ENCODE measurements at regions of chr3 and their contacts with region 1.

Region 1: GRCh38 chr3:149273096-149273751 is 51.6 kb upstream of the CP start:
- DNase-seq: no peak
- ATAC-seq: peak; percentile 89
- H3K4me3 ChIP-seq: no peak overlapping the region
- H3K27ac ChIP-seq: no peak overlapping the region
- H3K4me1 ChIP-seq: peaks cover 12% of the 10 kb centered on the region
- H3K27me3 ChIP-seq: no peaks in the 10 kb centered on the region
- CTCF ChIP-seq: peak; percentile 89

Region 2: DNA sequence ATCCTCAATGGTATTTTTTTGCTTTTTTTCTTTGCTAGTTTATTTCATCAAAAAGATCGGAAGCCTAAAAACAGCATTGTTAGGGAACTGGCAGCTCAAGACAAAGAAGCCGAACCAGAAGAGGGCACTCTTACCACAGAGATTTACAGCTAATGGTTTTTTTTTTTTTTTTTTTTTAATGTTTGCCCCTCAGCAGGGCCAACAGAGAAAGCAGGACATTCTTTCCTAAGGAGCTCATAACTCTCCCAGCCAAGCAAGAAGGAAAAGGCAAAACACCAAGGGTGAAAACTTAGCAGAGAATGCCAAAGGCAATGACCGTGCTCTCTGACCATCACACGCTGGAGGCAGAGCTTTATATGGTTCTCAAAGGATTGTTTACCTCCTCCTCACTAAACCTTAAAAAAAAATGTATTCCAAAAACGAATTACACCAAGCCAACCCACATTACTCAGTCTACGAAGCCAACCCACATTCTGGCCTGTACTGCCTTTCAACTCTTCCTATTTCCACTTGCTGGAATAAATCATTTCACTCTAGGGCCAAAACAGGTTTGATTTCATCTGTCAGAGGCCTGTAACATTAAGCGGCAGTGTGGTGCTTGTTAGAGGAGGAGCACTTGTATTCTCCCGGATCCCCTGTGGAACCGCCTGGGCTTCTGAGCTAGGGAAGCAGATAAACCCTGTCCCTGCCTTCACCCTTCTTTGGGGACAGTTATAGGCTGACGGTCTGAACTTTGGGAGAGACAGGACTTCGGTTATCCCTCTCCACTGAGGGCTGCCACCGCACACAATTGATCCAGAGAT is 317.5 kb before region 1 on chr3:
- intact Hi-C with region 1: loop called (anchors 10 kb)
- DNase-seq: no peak
- ATAC-seq: peak; percentile 57 to 83
- H3K4me3 ChIP-seq: no peak overlapping the region
- H3K27ac ChIP-seq: peak overlapping the region; percentile 57
- H3K4me1 ChIP-seq: peaks cover 8% of the 10 kb centered on the region
- H3K27me3 ChIP-seq: no peaks in the 10 kb centered on the region
- CTCF ChIP-seq: peak; percentile 60

Region 3: DNA sequence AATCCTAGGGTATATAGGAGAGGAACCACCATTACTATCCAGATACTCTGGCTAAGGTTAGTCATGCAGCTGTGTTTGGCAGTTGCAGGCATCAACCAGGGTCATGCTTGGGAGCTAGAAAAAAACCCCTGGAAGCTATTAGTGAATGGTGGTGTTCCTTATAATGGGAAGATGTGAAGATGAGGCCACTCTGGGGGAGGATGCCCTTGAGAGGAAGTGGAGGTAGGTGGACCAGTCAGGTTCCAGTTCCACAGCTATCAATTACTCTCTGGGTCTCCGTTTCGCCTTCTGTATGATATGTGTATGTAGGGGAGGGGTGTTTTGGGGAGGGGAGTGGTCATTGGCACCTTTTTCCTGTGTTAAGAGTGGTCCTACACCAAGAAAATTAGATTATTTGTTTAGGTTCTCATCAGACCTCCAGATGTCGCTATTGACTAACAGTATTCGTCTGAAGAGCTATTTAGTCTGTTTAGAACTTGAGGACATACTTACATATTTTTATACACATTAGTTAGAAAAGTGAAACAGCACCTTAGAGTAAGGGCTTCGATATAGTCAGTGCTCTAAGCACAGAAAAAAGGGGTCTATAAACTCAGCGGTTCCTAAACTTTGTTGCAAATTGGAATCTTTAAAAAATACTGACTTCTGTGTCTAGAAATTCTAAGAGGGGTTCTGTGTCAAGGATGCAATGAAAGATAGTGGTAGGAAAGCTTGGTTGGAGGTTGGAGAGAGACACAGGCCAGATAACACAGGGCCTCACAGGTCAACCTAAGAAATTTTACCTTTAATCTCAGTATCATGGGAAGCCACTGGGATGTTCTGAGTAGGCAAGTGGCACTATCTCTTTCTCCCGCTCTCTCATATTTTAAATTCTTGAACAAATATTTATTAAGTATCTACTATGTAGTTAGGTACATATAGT is 152.9 kb before region 1 on chr3:
- intact Hi-C with region 1: loop called (anchors 5 kb)
- DNase-seq: no peak
- ATAC-seq: peak; percentile 83 to 91
- H3K4me3 ChIP-seq: no peak overlapping the region
- H3K27ac ChIP-seq: no peak overlapping the region
- H3K4me1 ChIP-seq: peaks cover 4% of the 10 kb centered on the region
- H3K27me3 ChIP-seq: no peaks in the 10 kb centered on the region
- CTCF ChIP-seq: peak; percentile 60

Measured in lower lobe of right lung (tissue), 2 donors.